ENCODE measurements at regions of chr2 and their contacts with region 1.

Region 1: GRCh38 chr2:223993621-223994232 is 36.5 kb downstream of the MRPL44 start:
- DNase-seq: peak; percentile 52
- H3K4me3 ChIP-seq: no peak overlapping the region
- CTCF ChIP-seq: peak; percentile 76

Region 2: DNA sequence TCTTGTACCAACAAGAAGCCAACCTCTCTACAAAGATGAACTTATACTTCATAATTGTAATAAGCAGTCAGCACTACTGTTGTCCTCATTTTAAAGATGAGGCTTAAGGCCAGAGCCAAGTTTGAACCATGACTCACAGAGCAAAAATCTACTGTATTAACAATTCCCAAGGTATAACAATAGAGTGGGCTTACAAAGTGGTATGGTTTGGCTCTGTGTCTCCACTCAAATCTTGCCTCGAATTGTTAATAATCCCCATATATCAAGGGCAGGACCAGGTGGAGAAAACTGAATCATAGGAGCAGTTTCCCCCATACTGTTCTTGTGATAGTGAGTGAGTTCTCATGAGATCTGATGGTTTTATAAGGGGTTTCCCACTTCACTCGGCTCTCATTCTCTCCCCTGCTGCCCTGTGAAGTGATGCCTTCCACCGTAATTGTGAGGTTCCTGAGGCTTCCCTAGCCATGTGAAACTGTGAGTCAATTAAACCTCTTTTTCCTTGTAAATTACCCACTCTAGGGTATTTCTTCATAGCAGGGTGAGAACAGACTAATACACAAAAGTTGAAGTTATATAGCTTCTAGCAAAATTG is 17.0 kb before region 1 on chr2:
- CTCF ChIA-PET with region 1: interaction called, 133 read pairs
- POLR2A ChIA-PET with region 1: no interaction called
- DNase-seq: no peak
- H3K4me3 ChIP-seq: no peak overlapping the region
- CTCF ChIP-seq: no peak

Region 3: GRCh38 chr2:224017957-224018356 is 24.2 kb after region 1 on chr2:
- CTCF ChIA-PET with region 1: interaction called, 11 read pairs
- POLR2A ChIA-PET with region 1: no interaction called
- DNase-seq: no peak
- H3K4me3 ChIP-seq: no peak overlapping the region
- CTCF ChIP-seq: no peak

Region 4: DNA sequence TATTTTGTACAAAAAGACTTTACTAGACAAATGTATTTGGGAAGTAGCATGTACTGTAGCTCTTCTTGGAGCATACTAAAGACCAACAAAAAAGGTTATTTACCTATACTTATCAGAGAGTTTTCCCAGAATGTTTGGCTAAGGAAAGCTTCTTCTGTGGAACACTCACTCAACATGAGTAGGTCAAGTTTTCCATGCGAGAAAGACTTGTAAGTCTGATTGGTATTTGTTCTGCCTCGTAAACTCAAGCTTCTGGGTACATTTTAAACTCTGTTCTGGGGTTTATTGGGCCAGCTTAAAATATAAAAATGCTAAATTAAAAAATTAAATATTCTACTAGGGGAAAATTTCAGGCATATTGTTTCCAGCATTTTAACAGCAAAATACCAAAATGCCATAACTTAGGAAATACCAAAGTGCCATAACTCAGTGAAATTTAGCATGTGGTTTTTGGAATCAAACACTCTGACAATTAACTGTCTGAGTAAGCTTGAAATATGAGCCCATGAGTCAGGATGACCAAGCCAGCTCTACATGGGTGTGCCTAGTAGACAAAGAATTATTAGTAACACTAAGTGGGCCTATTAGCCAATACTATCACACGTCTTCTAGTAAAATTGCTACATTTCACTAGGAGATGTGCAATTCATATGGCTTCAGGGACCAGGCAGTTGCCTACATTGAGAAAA is 92.6 kb after region 1 on chr2:
- CTCF ChIA-PET with region 1: interaction called, 13 read pairs
- POLR2A ChIA-PET with region 1: no interaction called
- DNase-seq: peak; percentile 73
- H3K4me3 ChIP-seq: no peak overlapping the region
- CTCF ChIP-seq: no peak

Region 5: DNA sequence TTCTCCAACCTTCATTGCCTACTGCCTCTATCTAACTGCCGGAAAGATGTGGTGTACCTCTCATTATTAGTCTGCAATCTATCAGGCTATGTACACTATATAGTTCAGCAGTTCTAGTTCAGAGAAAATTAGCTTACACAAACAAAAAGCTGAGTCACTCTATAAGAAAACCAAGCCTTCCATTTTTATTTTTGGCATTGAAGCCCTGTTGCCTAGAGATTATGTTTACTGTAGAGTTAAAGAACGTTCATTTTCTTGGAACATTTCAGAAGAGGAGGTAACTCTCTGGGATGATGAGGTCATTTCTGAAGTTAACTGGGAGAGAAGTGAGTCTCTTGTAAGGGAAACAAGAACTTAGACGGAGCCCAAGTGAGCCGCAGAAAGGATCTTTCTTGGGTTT is 274.7 kb after region 1 on chr2:
- CTCF ChIA-PET with region 1: interaction called, 10 read pairs
- POLR2A ChIA-PET with region 1: no interaction called
- DNase-seq: peak; percentile 75
- H3K4me3 ChIP-seq: no peak overlapping the region
- CTCF ChIP-seq: no peak

Region 6: GRCh38 chr2:224882291-224883171 is 888.8 kb after region 1 on chr2:
- CTCF ChIA-PET with region 1: no interaction called
- POLR2A ChIA-PET with region 1: no interaction called
- DNase-seq: peak; percentile 63
- H3K4me3 ChIP-seq: no peak overlapping the region
- CTCF ChIP-seq: no peak